Prostate gland (tissue), 2 donors: ENCODE measurements at regions of chr3 and their contacts with region 1.

Region 1: DNA sequence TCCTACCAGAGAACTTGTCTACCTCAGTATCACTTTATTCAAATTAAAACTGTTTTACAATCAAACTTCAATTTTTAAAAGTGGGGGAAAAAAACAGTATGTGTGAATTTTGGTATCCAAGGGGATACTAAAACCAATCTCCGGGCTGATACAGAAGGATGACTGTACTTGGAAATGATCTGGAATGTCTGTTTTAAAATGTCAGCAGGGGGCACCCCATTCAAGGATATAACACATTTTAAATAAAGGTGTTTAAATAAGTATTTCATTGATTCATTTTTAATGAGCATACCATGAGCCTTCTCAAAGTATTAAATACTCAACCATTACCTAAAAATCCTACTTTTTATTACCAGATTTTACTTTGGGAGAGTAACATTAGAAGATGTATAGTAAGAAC is 67.9 kb downstream of the ULK4 start:
- DNase-seq: peak; percentile 29
- H3K4me3 ChIP-seq: no peak overlapping the region
- H3K27ac ChIP-seq: no peak overlapping the region
- H3K4me1 ChIP-seq: no peaks in the 10 kb centered on the region
- H3K27me3 ChIP-seq: no peaks in the 10 kb centered on the region
- CTCF ChIP-seq: peak in 3 of 4 experiments; percentile 31 to 56 (median 54)
- POLR2A ChIP-seq: no peak

Region 2: DNA sequence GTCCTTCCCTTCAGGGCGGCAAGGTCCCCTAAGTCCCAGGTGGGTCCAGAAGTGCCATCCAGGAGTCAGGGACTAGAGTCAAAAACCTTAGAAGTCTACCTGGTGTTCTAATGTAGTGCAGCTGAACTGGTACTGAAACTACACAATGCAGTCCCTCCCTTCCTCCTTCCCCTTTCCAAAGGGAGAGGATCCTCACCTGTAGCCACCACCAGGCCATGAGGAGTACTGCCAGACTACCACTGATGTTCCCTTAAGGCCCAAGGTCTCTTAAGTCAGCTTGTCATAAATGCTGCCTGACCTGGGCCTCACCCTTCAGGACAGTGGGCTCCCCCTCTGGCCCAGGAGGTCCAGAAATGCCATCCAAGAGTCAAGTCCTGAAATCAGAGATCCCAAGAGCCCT is 31.0 kb before region 1 on chr3:
- intact Hi-C with region 1: no loop called
- DNase-seq: no peak
- H3K4me3 ChIP-seq: no peak overlapping the region
- H3K27ac ChIP-seq: no peak overlapping the region
- H3K4me1 ChIP-seq: no peaks in the 10 kb centered on the region
- H3K27me3 ChIP-seq: no peaks in the 10 kb centered on the region
- CTCF ChIP-seq: no peak
- POLR2A ChIP-seq: no peak

Region 3: DNA sequence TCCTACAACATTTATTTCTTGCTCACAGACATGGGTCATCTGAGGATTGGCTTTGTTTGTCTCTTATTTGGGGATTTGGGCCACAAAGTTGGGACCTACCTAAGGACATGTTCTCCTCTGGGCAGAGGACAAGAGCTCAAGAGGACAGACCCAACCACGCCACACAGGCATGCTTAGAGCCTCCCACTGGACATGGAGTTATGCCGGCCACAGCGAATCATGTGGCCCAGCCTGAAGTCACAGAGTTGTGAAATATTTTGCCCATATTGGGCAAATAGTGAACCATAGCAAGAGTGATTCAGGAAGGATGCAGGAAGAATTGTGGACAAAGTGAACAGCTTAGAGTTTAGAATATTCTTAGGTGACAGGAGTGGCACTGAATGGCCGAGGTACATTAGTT is 207.1 kb after region 1 on chr3:
- intact Hi-C with region 1: loop called (anchors 2 kb)
- DNase-seq: no peak
- H3K4me3 ChIP-seq: no peak overlapping the region
- H3K27ac ChIP-seq: no peak overlapping the region
- H3K4me1 ChIP-seq: no peaks in the 10 kb centered on the region
- H3K27me3 ChIP-seq: no peaks in the 10 kb centered on the region
- CTCF ChIP-seq: no peak
- POLR2A ChIP-seq: no peak